ENCODE measurements at regions of chr13 and their contacts with region 1.

Region 1: DNA sequence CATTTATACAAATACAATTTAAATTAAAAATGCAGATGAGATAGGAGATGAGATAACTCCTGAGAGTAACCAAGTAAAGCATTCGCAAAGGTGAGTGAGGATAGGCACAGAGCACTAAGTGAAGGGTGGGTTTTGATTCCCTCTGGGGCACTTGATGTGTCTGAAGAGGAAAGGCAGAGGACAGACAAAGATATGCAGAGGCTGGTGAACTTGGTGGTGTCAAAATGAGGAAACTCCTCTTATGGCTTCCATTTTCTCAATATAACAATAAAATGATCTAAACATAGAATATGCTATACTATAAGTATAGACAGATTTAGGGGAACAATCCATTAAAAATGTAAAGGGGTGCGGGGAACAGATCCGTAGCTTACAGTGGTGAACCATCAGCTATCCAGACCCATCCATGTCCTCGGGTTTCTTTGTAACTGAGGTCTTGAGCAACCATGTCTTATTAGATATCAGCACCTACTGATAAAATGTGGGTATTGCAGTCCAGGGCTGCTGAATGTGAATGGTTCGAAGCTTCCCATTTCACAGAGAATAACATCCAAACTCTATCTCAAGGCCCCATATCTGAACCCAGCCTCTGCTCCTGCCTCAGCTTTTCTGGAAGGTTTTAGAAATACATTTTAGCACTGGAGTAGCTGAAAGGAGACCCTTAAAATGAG is 73.9 kb upstream of the SLC10A2 start:
- DNase-seq: no peak
- ATAC-seq: peak; percentile 71
- H3K4me3 Mint-ChIP-seq: no peak overlapping the region
- H3K27ac Mint-ChIP-seq: no peak overlapping the region
- H3K4me1 Mint-ChIP-seq: no peaks in the 10 kb centered on the region
- H3K27me3 Mint-ChIP-seq: no peaks in the 10 kb centered on the region
- CTCF ChIP-seq: no peak

Region 2: GRCh38 chr13:102913914-102914313 is 226.2 kb before region 1 on chr13:
- CTCF ChIA-PET with region 1: interaction called, 46 read pairs
- POLR2A ChIA-PET with region 1: no interaction called
- intact Hi-C with region 1: loop called (anchors 1 kb)
- DNase-seq: no peak
- ATAC-seq: no peak
- H3K4me3 Mint-ChIP-seq: no peak overlapping the region
- H3K27ac Mint-ChIP-seq: no peak overlapping the region
- H3K4me1 Mint-ChIP-seq: peaks cover 3% of the 10 kb centered on the region
- H3K27me3 Mint-ChIP-seq: peaks cover under 1% of the 10 kb centered on the region
- CTCF ChIP-seq: no peak

Region 3: GRCh38 chr13:103431856-103432255 is 291.7 kb after region 1 on chr13:
- CTCF ChIA-PET with region 1: no interaction called
- POLR2A ChIA-PET with region 1: no interaction called
- intact Hi-C with region 1: no loop called
- DNase-seq: no peak
- ATAC-seq: no peak
- H3K4me3 Mint-ChIP-seq: no peak overlapping the region
- H3K27ac Mint-ChIP-seq: no peak overlapping the region
- H3K4me1 Mint-ChIP-seq: no peaks in the 10 kb centered on the region
- H3K27me3 Mint-ChIP-seq: no peaks in the 10 kb centered on the region
- CTCF ChIP-seq: no peak